ENCODE measurements at regions of chr6 and their contacts with region 1.

Region 1: GRCh38 chr6:17233531-17233930 is 47.6 kb upstream of the RBM24 start:
- DNase-seq: no peak
- ATAC-seq: no peak
- H3K4me3 ChIP-seq: no peak overlapping the region
- H3K27ac ChIP-seq: no peak overlapping the region
- H3K4me1 ChIP-seq: no peaks in the 10 kb centered on the region
- H3K27me3 ChIP-seq: no peaks in the 10 kb centered on the region
- CTCF ChIP-seq: no peak

Region 2: DNA sequence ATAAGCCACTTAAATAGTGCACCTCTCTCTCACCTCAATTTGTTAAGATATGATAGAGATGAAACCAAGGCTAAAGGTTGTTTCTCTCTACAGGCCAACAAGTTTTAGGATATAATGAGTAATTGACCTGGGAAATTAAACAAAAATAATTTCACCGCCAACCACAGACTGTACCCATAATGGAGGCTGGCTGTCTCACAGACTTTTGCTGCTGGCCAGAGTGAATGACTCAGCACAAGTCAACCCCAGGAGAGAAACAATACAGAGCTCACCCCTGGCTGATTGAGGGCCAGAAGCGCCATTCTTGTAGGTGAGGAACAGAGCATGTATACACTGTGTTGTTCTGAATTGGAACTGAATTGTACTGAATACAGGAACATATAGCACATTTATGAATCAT is 259.8 kb after region 1 on chr6:
- CTCF ChIA-PET with region 1: interaction called, 14 read pairs
- POLR2A ChIA-PET with region 1: no interaction called
- in situ Hi-C with region 1: no loop called
- intact Hi-C with region 1: no loop called
- DNase-seq: no peak
- ATAC-seq: no peak
- H3K4me3 ChIP-seq: no peak overlapping the region
- H3K27ac ChIP-seq: no peak overlapping the region
- H3K4me1 ChIP-seq: peaks cover 4% of the 10 kb centered on the region; the same call in 1 of the 2 replicates
- H3K27me3 ChIP-seq: no peaks in the 10 kb centered on the region
- CTCF ChIP-seq: no peak

Measured in Panc1 (cell line).